Calu3 (cell line): ENCODE measurements at regions of chr18 and their contacts with region 1.

Region 1: DNA sequence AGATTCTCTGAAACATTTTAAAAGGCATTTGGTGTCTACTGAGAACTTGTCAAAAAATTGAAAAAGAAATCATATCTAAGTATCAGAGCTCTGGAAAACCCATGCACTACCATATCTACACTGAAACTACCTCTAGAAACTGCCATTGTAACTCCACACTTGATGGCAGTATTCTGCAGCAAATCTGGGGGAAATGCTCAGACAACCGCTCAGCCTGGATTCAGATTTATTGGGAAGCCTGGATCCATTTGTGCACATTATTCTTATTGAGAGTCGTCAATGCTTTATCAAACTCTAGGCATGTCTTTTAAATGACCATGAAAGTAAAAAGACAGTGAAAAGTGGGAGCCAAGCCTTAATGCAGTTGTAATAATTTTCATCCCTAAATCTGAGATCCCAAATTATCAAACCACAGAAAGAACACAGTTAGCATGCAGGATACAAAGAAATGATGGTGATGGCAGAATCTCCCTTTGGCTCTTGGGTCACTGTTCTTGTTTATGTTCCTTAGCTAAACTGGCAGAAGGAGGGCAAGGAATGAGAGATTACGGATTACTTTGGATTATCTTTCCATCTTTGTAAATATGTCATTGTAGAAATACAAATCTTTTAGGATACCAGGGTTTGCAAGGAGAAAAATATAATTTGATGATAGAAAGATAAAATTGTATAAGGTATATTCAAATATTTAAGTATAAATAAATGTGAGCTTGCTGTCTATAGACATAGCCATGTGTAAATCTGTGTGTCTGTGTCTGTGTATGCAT is 512.1 kb upstream of the SYT4 start:
- DNase-seq: no peak
- H3K4me3 Mint-ChIP-seq: no peak overlapping the region
- H3K27ac Mint-ChIP-seq: no peak overlapping the region
- H3K4me1 Mint-ChIP-seq: peaks cover 37% of the 10 kb centered on the region
- H3K27me3 Mint-ChIP-seq: no peaks in the 10 kb centered on the region
- CTCF ChIP-seq: no peak

Region 2: GRCh38 chr18:43661570-43661969 is 127.8 kb before region 1 on chr18:
- CTCF ChIA-PET with region 1: no interaction called
- intact Hi-C with region 1: loop called (anchors 5 kb)
- DNase-seq: peak; percentile 61
- H3K4me3 Mint-ChIP-seq: no peak overlapping the region
- H3K27ac Mint-ChIP-seq: peak overlapping the region; percentile 70
- H3K4me1 Mint-ChIP-seq: peaks cover 17% of the 10 kb centered on the region
- H3K27me3 Mint-ChIP-seq: no peaks in the 10 kb centered on the region
- CTCF ChIP-seq: peak; percentile 58

Region 3: GRCh38 chr18:43970656-43971055 is 181.2 kb after region 1 on chr18:
- CTCF ChIA-PET with region 1: no interaction called
- intact Hi-C with region 1: no loop called
- DNase-seq: no peak
- H3K4me3 Mint-ChIP-seq: no peak overlapping the region
- H3K27ac Mint-ChIP-seq: no peak overlapping the region
- H3K4me1 Mint-ChIP-seq: no peaks in the 10 kb centered on the region
- H3K27me3 Mint-ChIP-seq: no peaks in the 10 kb centered on the region
- CTCF ChIP-seq: no peak

Region 4: DNA sequence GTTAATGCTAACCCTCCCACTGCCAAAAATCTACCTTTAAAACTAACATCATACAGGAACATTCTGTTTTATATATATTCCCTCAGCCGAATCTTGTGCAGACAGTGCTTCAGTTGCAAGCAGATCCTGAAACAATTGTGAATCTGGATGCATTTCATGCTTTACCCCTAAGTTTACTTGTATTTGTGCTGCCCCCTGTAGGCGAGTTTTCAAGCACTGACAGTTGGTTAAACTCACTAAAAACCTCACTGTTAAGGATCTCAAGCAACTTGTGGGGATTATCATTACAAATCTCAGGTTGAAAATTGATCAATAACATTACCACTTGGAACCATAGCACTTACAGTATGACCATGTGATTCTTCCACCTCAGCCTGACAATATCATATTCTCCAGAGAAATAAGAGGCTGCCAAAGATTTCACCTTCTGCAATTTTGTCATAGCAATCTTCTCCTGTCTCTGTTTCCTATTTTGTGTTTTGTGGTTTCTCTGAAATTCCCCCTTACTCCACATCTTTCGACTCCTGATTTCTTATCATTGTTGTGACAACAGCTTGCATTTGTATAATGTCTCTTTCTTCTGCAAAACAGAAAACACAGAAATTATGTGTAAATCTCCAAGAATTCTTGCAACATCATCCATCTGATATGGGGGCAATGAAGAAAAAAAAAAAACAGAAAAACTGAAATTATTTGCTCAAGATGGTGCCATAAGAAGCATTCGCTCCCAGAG is 536.7 kb after region 1 on chr18:
- CTCF ChIA-PET with region 1: no interaction called
- intact Hi-C with region 1: loop called (anchors 5 kb)
- DNase-seq: peak; percentile 78
- H3K4me3 Mint-ChIP-seq: no peak overlapping the region
- H3K27ac Mint-ChIP-seq: no peak overlapping the region
- H3K4me1 Mint-ChIP-seq: no peaks in the 10 kb centered on the region
- H3K27me3 Mint-ChIP-seq: no peaks in the 10 kb centered on the region
- CTCF ChIP-seq: peak; percentile 63